ENCODE measurements at regions of chr19 and their contacts with region 1.

Region 1: GRCh38 chr19:15177269-15178116 is 23.3 kb downstream of the NOTCH3 start:
- DNase-seq: no peak
- ATAC-seq: peak; percentile 94
- H3K4me3 ChIP-seq: peak overlapping the region; percentile 14 to 25; a peak in 3 of 4 replicates
- H3K27ac ChIP-seq: no peak overlapping the region
- H3K4me1 ChIP-seq: no peaks in the 10 kb centered on the region
- H3K27me3 ChIP-seq: no peaks in the 10 kb centered on the region
- CTCF ChIP-seq: peak; percentile 95

Region 2: GRCh38 chr19:15122721-15123433 is 54.6 kb before region 1 on chr19:
- CTCF ChIA-PET with region 1: no interaction called
- POLR2A ChIA-PET with region 1: interaction called, 18 read pairs
- in situ Hi-C with region 1: no loop called
- intact Hi-C with region 1: no loop called
- DNase-seq: no peak
- ATAC-seq: no peak
- H3K4me3 ChIP-seq: no peak overlapping the region
- H3K27ac ChIP-seq: no peak overlapping the region
- H3K4me1 ChIP-seq: peaks cover 11% of the 10 kb centered on the region
- H3K27me3 ChIP-seq: no peaks in the 10 kb centered on the region
- CTCF ChIP-seq: no peak

Region 3: GRCh38 chr19:15161028-15161989 is 16.2 kb before region 1 on chr19:
- CTCF ChIA-PET with region 1: interaction called, 18 read pairs
- POLR2A ChIA-PET with region 1: no interaction called
- in situ Hi-C with region 1: no loop called
- intact Hi-C with region 1: no loop called
- DNase-seq: no peak
- ATAC-seq: peak; percentile 87
- H3K4me3 ChIP-seq: no peak overlapping the region
- H3K27ac ChIP-seq: no peak overlapping the region
- H3K4me1 ChIP-seq: no peaks in the 10 kb centered on the region
- H3K27me3 ChIP-seq: no peaks in the 10 kb centered on the region
- CTCF ChIP-seq: peak; percentile 84

Region 4: DNA sequence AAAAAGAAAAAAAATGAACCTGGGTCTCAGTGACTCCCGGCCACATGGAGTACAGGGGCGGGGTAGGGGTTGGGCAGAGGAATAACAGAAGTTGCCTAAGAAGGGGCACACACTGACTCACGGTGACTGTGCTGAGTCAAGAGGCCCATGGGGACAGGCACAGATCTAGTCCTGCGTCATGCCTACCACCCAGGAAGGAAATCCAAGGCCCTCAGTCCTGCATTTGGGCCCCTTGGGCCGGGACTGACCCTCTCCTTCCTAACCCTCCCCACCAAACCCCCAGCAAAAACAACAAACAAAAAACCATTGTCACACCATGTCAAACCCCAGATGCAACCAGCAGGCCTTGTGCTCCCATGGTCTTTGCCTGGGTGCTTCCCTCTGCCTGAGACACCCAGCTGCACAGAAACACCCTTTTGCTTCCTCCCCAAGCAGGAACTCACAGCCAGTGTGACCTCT is 32.9 kb after region 1 on chr19:
- CTCF ChIA-PET with region 1: no interaction called
- POLR2A ChIA-PET with region 1: no interaction called
- in situ Hi-C with region 1: no loop called
- intact Hi-C with region 1: no loop called
- DNase-seq: no peak
- ATAC-seq: no peak
- H3K4me3 ChIP-seq: no peak overlapping the region
- H3K27ac ChIP-seq: no peak overlapping the region
- H3K4me1 ChIP-seq: no peaks in the 10 kb centered on the region
- H3K27me3 ChIP-seq: no peaks in the 10 kb centered on the region
- CTCF ChIP-seq: no peak

Region 5: GRCh38 chr19:15337202-15337601 is 159.7 kb after region 1 on chr19:
- CTCF ChIA-PET with region 1: no interaction called
- POLR2A ChIA-PET with region 1: no interaction called
- in situ Hi-C with region 1: no loop called
- intact Hi-C with region 1: no loop called
- DNase-seq: peak; percentile 30
- ATAC-seq: no peak
- H3K4me3 ChIP-seq: no peak overlapping the region
- H3K27ac ChIP-seq: no peak overlapping the region
- H3K4me1 ChIP-seq: no peaks in the 10 kb centered on the region
- H3K27me3 ChIP-seq: no peaks in the 10 kb centered on the region
- CTCF ChIP-seq: no peak